ENCODE measurements at regions of chr18 and their contacts with region 1.

Region 1: DNA sequence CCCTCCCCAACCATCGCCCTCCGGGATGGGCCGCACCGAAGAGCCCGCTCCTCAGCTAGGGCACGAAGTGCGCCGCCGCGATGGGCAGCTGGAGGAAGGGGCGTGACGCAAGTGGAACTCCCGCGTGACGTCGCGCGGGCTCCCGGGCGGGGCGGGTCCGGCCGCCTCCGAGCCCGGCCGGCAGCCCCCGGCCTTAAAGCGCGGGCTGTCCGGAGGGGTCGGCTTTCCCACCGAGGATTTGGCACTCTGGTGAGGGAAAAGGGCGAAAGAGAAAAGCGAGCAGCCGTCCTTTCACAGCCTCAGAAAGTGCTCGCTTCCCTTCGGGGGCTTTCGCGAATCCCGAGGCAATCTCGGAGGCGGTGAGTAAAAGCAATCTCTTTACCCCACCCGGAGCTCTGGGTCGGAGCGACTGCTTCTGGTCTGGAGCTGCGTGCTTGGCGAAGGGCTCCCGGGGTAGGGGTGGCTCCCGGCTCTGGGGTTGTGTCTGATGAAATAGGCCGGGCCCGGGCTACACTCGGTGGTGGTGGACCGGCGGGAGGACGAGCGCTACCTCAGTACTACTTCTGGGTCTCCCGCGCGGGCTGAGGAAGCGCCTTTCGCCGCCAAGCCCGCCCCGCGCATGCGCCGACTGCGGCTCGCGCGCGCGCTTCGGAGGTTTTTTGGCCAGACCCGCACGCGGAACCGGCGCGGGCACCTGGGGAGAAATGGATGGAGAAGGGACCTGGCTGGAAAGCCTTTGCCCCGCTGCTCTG is at the start of gene RBBP8:
- DNase-seq: peak; percentile 91
- H3K4me3 ChIP-seq: peak within 1 kb of the TSS; percentile 77
- H3K27ac ChIP-seq: peak within 1 kb of the TSS; percentile 88
- H3K4me1 ChIP-seq: peaks cover 37% of the 10 kb centered on the region
- CTCF ChIP-seq: no peak
- total RNA-seq, gene RBBP8: 51.0 and 57.8 TPM in 2 replicates

Region 2: GRCh38 chr18:22613788-22614187 is 319.6 kb before region 1 on chr18:
- CTCF ChIA-PET with region 1: no interaction called
- POLR2A ChIA-PET with region 1: no interaction called
- intact Hi-C with region 1: no loop called
- DNase-seq: no peak
- H3K4me3 ChIP-seq: no peak overlapping the region
- H3K27ac ChIP-seq: no peak overlapping the region
- H3K4me1 ChIP-seq: no peaks in the 10 kb centered on the region
- CTCF ChIP-seq: no peak

Region 3: DNA sequence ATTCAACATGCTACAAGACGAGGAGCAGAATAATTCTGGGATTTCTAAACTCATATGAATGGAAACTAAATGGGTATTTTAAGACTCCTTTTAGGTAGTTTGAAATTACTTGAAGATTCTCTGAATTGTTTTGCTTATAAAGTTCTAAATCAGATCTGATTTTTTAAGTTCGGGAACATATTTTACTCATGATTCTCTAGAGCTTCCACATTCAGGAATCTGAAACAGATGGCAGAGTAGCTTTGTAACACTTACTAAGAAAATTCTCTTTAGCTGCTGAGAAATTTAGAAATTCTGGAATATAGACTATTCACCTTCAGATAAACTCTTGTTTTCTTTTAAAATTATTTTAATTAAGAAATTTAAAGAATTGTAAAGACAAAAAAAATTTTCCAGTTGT is 13.5 kb after region 1 on chr18:
- CTCF ChIA-PET with region 1: interaction called, 3 read pairs
- POLR2A ChIA-PET with region 1: interaction called, 10 read pairs
- intact Hi-C with region 1: no loop called
- DNase-seq: no peak
- H3K4me3 ChIP-seq: no peak overlapping the region
- H3K27ac ChIP-seq: no peak overlapping the region
- H3K4me1 ChIP-seq: peaks cover 6% of the 10 kb centered on the region
- CTCF ChIP-seq: no peak

Region 4: DNA sequence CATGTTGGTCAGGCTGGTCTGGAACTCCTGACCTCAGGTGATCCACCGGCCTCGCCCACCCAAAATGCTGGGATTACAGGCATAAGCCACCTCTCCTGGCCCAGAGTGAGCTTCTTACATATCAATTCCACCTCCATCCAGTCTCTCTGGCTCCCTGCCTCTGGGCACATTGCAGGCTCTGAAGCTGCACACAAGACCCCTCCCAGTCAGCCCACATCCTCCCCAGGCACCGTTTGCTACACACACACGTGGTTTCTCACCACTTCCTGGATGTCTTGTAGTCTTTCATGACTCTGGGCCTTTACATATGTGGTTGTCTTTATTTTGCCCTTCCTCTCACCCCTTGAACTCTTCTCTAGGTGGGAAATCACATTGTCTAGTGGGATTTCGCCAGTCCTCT is 137.9 kb after region 1 on chr18:
- CTCF ChIA-PET with region 1: no interaction called
- POLR2A ChIA-PET with region 1: no interaction called
- intact Hi-C with region 1: loop called (anchors 10 kb)
- DNase-seq: peak; percentile 95
- H3K4me3 ChIP-seq: peak overlapping the region; percentile 19
- H3K27ac ChIP-seq: peak overlapping the region; percentile 66
- H3K4me1 ChIP-seq: peaks cover 50% of the 10 kb centered on the region
- CTCF ChIP-seq: no peak

Region 5: GRCh38 chr18:23416298-23416697 is 482.9 kb after region 1 on chr18:
- CTCF ChIA-PET with region 1: no interaction called
- POLR2A ChIA-PET with region 1: interaction called, 3 read pairs
- intact Hi-C with region 1: loop called (anchors 2 kb)
- DNase-seq: no peak
- H3K4me3 ChIP-seq: no peak overlapping the region
- H3K27ac ChIP-seq: no peak overlapping the region
- H3K4me1 ChIP-seq: peaks cover 23% of the 10 kb centered on the region
- CTCF ChIP-seq: no peak

Region 6: DNA sequence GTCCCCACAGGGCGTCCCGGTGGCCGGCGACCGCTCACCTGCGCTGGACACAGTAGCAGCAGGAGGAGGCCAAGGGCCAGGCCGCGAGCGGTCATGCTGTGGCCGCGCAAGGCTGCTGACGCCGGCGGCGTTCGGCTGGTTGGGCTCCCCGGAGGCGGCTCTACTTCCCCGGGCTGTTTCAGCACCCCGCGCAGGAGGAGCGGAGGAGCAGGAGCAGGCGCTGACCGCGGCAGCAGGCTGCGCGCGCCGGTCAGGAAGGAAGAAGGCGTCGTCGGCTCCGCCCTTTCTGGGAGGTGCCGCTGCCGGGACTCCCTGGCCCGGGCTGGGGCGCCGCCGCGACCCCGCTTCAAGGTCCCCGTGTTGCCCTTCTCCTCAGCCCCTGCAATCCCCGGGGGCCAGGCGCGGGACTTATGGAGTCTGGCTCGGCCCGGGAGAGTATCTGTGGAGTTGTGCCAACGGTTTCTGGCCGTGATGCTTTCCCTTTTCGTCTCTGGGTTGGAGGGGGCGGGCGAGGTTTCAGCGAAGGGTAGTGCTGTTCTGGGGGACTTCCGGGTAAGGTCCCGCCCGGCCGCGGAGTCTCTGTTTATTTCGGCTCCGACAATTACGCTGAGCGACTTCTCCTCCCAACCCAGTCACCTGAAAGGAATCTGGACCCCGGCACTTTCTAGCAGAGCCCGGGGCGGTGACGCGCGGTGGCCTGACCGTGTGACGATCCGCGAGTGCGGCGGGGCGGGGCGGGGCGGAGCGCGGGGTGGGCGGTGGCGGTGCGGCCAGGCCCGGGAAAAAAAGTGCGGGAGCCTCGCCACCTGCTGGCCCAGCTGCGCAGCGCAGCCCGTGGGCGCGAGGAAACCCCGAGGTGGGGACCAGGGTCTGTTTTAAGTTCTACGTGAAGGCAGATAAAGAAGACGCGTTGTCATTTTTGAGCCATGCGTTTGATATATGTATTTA is 653.1 kb after region 1 on chr18 and contains the start of gene NPC1:
- CTCF ChIA-PET with region 1: no interaction called
- POLR2A ChIA-PET with region 1: no interaction called
- intact Hi-C with region 1: loop called (anchors 1 kb)
- DNase-seq: peak; percentile 94
- H3K4me3 ChIP-seq: peak within 1 kb of the TSS; percentile 87
- H3K27ac ChIP-seq: peak within 1 kb of the TSS; percentile 85
- H3K4me1 ChIP-seq: peaks cover 22% of the 10 kb centered on the region
- CTCF ChIP-seq: peak; percentile 84
- total RNA-seq, gene NPC1: 22.3 and 26.0 TPM in 2 replicates